Mammary epithelial cell (primary cell): ENCODE measurements at regions of chr12 and their contacts with region 1.

Region 1: GRCh38 chr12:93802698-93803423 is 125.7 kb downstream of the CRADD start:
- DNase-seq: no peak
- H3K4me3 ChIP-seq: no peak overlapping the region
- H3K27ac ChIP-seq: no peak overlapping the region
- H3K4me1 ChIP-seq: peaks cover 33% of the 10 kb centered on the region
- H3K27me3 ChIP-seq: no peaks in the 10 kb centered on the region
- CTCF ChIP-seq: peak in 1 of 2 donors; percentile 31

Region 2: GRCh38 chr12:93742110-93742934 is 60.5 kb before region 1 on chr12:
- CTCF ChIA-PET with region 1: no interaction called
- dilution Hi-C with region 1: no loop called
- in situ Hi-C with region 1: no loop called
- intact Hi-C with region 1: loop called (anchors 2 kb)
- DNase-seq: peak; percentile 65
- H3K4me3 ChIP-seq: peak overlapping the region; percentile 55 to 74 (median 60)
- H3K27ac ChIP-seq: peak overlapping the region; percentile 81
- H3K4me1 ChIP-seq: peaks cover 16% of the 10 kb centered on the region
- H3K27me3 ChIP-seq: no peaks in the 10 kb centered on the region
- CTCF ChIP-seq: peak; percentile 12 to 48

Region 3: GRCh38 chr12:94318181-94318580 is 515.3 kb after region 1 on chr12:
- CTCF ChIA-PET with region 1: no interaction called
- dilution Hi-C with region 1: no loop called
- in situ Hi-C with region 1: no loop called
- intact Hi-C with region 1: no loop called
- DNase-seq: no peak
- H3K4me3 ChIP-seq: no peak overlapping the region
- H3K27ac ChIP-seq: no peak overlapping the region
- H3K4me1 ChIP-seq: no peaks in the 10 kb centered on the region
- H3K27me3 ChIP-seq: no peaks in the 10 kb centered on the region
- CTCF ChIP-seq: no peak